ENCODE measurements at regions of chr4 and their contacts with region 1.

Region 1: DNA sequence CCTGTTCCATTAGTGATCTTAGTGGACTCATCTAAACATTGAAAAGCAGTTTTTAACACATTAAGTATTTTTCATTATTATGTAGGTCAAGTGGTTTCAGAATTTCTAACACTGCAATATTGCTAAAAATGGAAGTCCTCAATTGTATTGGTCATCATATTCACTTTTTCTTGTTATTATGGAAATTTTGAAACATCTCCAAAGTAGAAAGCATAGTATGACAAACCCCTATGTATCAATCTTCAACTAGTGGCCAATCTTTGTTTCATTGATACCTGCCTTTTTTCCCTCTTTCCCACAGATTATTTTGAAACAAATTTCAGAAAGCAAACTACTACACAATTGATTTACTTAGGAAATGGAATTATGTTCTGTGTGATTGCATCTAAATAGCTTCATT is 14.5 kb upstream of the ABCG2 start:
- DNase-seq: no peak
- H3K4me3 ChIP-seq: no peak overlapping the region
- H3K27me3 ChIP-seq: no peaks in the 10 kb centered on the region
- CTCF ChIP-seq: no peak

Region 2: DNA sequence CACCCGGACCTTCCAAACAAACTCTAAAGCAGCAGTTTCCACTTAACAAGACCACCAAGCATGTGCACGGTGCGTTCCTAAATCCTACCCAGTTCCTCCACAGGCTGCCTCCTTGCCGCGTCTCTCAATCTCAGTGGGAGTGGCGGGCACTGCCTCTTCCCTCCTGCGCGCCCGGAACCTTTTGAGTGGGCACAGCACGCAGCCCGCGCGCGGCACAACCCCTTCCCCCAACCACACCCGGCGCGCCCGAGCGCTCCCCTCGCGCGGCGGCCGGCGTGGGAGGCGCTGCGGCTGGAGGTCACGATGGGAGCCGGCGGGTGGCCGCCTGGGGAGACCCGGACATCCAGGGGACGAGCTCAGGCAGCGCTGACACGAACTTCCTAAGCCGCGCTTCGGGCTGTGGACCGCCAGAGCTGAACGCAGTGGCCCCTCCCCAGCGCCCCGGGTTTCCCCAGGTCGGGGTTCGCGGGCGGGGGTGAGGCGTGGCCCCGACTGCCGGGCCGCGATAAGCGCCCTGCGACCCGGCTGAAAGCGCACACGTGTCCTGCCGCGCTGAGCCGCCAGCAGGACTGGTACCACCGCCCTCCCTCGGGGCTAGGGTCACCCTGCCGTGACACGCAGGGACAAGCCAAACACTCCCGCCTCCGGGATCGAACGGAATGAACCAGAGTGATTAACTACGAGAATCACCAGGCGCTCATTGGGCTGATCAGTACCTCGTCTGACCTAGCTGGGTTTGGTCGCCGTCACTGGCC is 14.3 kb before region 1 on chr4 and contains the start of gene ABCG2:
- CTCF ChIA-PET with region 1: interaction called, 3 read pairs
- POLR2A ChIA-PET with region 1: interaction called, 17 read pairs
- DNase-seq: no peak
- H3K4me3 ChIP-seq: peak within 1 kb of the TSS; percentile 61
- H3K27me3 ChIP-seq: no peaks in the 10 kb centered on the region
- CTCF ChIP-seq: no peak
- polyA plus RNA-seq, gene ABCG2: 0.45 and 0.65 TPM in 2 replicates

Measured in BJ (cell line).